ENCODE measurements at regions of chr17 and their contacts with region 1.

Region 1: GRCh38 chr17:40531051-40531991 is 29.9 kb upstream of the TNS4 start:
- DNase-seq: peak; percentile 53 to 85 (median 58)
- H3K4me3 ChIP-seq: no peak overlapping the region
- H3K4me3 Mint-ChIP-seq: peak overlapping the region in 7 of 8 donors; percentile 27 to 75 (median 37)
- H3K27ac ChIP-seq: no peak overlapping the region
- H3K27ac Mint-ChIP-seq: peak overlapping the region; percentile 78 to 100 (median 84)
- H3K4me1 ChIP-seq: peaks cover 77% of the 10 kb centered on the region
- H3K4me1 Mint-ChIP-seq: peaks cover 57 to 82% (median 65%) of the 10 kb centered on the region in 4 donors
- H3K27me3 ChIP-seq: no peaks in the 10 kb centered on the region
- H3K27me3 Mint-ChIP-seq: peaks cover 0 to 2% of the 10 kb centered on the region in 2 donors

Region 2: GRCh38 chr17:40062329-40063186 is 468.8 kb before region 1 on chr17 and contains the start of gene THRA:
- CTCF ChIA-PET with region 1: no interaction called
- POLR2A ChIA-PET with region 1: no interaction called
- intact Hi-C with region 1: no loop called
- DNase-seq: peak; percentile 71 to 75 (median 73)
- H3K4me3 ChIP-seq: peak within 1 kb of the TSS; percentile 57 to 70
- H3K4me3 Mint-ChIP-seq: peak within 1 kb of the TSS; percentile 90 to 96 (median 94)
- H3K27ac ChIP-seq: peak within 1 kb of the TSS; percentile 70
- H3K27ac Mint-ChIP-seq: peak within 1 kb of the TSS; percentile 81 to 96 (median 91)
- H3K4me1 ChIP-seq: peaks cover 49% of the 10 kb centered on the region
- H3K4me1 Mint-ChIP-seq: peaks cover 33 to 53% (median 42%) of the 10 kb centered on the region in 4 donors
- H3K27me3 ChIP-seq: peaks cover 3% of the 10 kb centered on the region
- H3K27me3 Mint-ChIP-seq: peaks cover 1% of the 10 kb centered on the region in 2 donors
- total RNA-seq, gene THRA: 35.9 to 41.3 TPM

Region 3: DNA sequence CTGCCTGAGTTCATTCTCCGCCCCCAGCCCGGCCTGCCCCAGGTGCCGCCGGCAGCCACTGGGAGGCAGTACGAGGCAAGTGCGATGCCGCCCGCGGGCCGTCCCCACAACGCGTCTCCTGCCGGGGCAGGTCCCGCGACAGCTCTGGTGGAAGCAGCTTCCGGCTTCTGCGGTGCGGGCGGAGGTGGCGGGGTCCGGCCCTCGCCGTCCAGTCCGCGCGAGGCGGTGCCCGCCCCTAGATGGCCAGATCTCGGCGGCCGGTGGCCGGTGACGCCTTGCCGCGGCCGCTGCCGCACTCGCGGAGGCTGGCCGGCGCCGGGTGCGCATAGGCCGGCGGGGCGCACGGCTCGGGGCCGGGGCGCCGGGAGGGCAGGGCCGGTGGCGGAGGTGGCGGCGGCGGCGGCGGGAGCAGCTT is 168.6 kb before region 1 on chr17:
- CTCF ChIA-PET with region 1: interaction called, 71 read pairs
- POLR2A ChIA-PET with region 1: interaction called, 26 read pairs
- intact Hi-C with region 1: loop called (anchors 1 kb)
- DNase-seq: peak; percentile 72 to 76 (median 74)
- H3K4me3 ChIP-seq: peak overlapping the region in 1 of 2 donors; percentile 47
- H3K4me3 Mint-ChIP-seq: peak overlapping the region in 7 of 8 donors; percentile 39 to 82 (median 64)
- H3K27ac ChIP-seq: no peak overlapping the region
- H3K27ac Mint-ChIP-seq: peak overlapping the region in 3 of 7 donors; percentile 11 to 69 (median 57)
- H3K4me1 ChIP-seq: peaks cover 21% of the 10 kb centered on the region
- H3K4me1 Mint-ChIP-seq: peaks cover 5 to 12% (median 9%) of the 10 kb centered on the region in 4 donors
- H3K27me3 ChIP-seq: no peaks in the 10 kb centered on the region
- H3K27me3 Mint-ChIP-seq: peaks cover 0 to 7% of the 10 kb centered on the region in 2 donors

Region 4: DNA sequence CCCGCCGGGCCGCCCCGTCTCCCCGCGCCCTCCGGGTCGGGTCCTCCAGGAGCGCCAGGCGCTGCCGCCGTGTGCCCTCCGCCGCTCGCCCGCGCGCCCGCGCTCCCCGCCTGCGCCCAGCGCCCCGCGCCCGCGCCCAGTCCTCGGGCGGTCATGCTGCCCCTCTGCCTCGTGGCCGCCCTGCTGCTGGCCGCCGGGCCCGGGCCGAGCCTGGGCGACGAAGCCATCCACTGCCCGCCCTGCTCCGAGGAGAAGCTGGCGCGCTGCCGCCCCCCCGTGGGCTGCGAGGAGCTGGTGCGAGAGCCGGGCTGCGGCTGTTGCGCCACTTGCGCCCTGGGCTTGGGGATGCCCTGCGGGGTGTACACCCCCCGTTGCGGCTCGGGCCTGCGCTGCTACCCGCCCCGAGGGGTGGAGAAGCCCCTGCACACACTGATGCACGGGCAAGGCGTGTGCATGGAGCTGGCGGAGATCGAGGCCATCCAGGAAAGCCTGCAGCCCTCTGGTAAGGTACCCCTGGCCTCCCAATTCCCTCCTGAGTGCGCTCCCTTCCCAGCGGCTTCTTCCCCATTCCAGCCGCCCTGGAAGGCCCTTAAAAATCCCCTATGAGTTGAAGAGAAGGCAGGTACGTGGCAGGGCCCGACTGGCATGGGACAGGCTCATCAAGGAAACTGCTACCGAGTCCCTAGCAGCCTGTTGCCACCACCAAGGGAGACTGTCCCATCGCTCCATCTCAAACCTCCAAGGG is 87.6 kb before region 1 on chr17:
- CTCF ChIA-PET with region 1: interaction called, 192 read pairs
- POLR2A ChIA-PET with region 1: interaction called, 75 read pairs
- intact Hi-C with region 1: loop called (anchors 1 kb)
- DNase-seq: peak; percentile 55 to 69 (median 62)
- H3K4me3 ChIP-seq: peak overlapping the region; percentile 67 to 73
- H3K4me3 Mint-ChIP-seq: peak overlapping the region; percentile 80 to 97 (median 86)
- H3K27ac ChIP-seq: peak overlapping the region; percentile 37
- H3K27ac Mint-ChIP-seq: peak overlapping the region; percentile 85 to 97 (median 93)
- H3K4me1 ChIP-seq: peaks cover 48% of the 10 kb centered on the region
- H3K4me1 Mint-ChIP-seq: peaks cover 23 to 51% (median 35%) of the 10 kb centered on the region in 4 donors
- H3K27me3 ChIP-seq: no peaks in the 10 kb centered on the region
- H3K27me3 Mint-ChIP-seq: peaks cover 2 to 6% of the 10 kb centered on the region in 2 donors

Region 5: GRCh38 chr17:40490289-40490853 is 41.0 kb before region 1 on chr17:
- CTCF ChIA-PET with region 1: interaction called, 91 read pairs
- POLR2A ChIA-PET with region 1: interaction called, 29 read pairs
- intact Hi-C with region 1: no loop called
- DNase-seq: no peak
- H3K4me3 ChIP-seq: no peak overlapping the region
- H3K4me3 Mint-ChIP-seq: peak overlapping the region in 4 of 8 donors; percentile 20 to 65 (median 60)
- H3K27ac ChIP-seq: no peak overlapping the region
- H3K27ac Mint-ChIP-seq: peak overlapping the region in 5 of 7 donors; percentile 29 to 88 (median 56)
- H3K4me1 ChIP-seq: peaks cover 54% of the 10 kb centered on the region
- H3K4me1 Mint-ChIP-seq: peaks cover 24 to 60% (median 46%) of the 10 kb centered on the region in 4 donors
- H3K27me3 ChIP-seq: no peaks in the 10 kb centered on the region
- H3K27me3 Mint-ChIP-seq: no peaks in the 10 kb centered on the region

Region 6: GRCh38 chr17:40542558-40543411 is 11.5 kb after region 1 on chr17:
- CTCF ChIA-PET with region 1: interaction called, 512 read pairs
- POLR2A ChIA-PET with region 1: interaction called, 1,088 read pairs
- intact Hi-C with region 1: loop called (anchors 1 kb)
- DNase-seq: peak in 4 of 5 donors; percentile 37 to 82 (median 50)
- H3K4me3 ChIP-seq: no peak overlapping the region
- H3K4me3 Mint-ChIP-seq: peak overlapping the region in 6 of 8 donors; percentile 67 to 94 (median 88)
- H3K27ac ChIP-seq: peak overlapping the region; percentile 69
- H3K27ac Mint-ChIP-seq: peak overlapping the region; percentile 94 to 100 (median 99)
- H3K4me1 ChIP-seq: peaks cover 90% of the 10 kb centered on the region
- H3K4me1 Mint-ChIP-seq: peaks cover 60 to 91% (median 75%) of the 10 kb centered on the region in 4 donors
- H3K27me3 ChIP-seq: no peaks in the 10 kb centered on the region
- H3K27me3 Mint-ChIP-seq: peaks cover 0 to 4% of the 10 kb centered on the region in 2 donors

Region 7: GRCh38 chr17:40810505-40810904 is 279.2 kb after region 1 on chr17:
- CTCF ChIA-PET with region 1: no interaction called
- POLR2A ChIA-PET with region 1: no interaction called
- intact Hi-C with region 1: no loop called
- DNase-seq: no peak
- H3K4me3 ChIP-seq: no peak overlapping the region
- H3K4me3 Mint-ChIP-seq: no peak overlapping the region
- H3K27ac ChIP-seq: no peak overlapping the region
- H3K27ac Mint-ChIP-seq: no peak overlapping the region
- H3K4me1 ChIP-seq: no peaks in the 10 kb centered on the region
- H3K4me1 Mint-ChIP-seq: no peaks in the 10 kb centered on the region
- H3K27me3 ChIP-seq: peaks cover 30% of the 10 kb centered on the region
- H3K27me3 Mint-ChIP-seq: peaks cover 52 to 55% of the 10 kb centered on the region in 2 donors